Esophagus muscularis mucosa (tissue), 4 donors: ENCODE measurements at regions of chr3 and their contacts with region 1.

Region 1: DNA sequence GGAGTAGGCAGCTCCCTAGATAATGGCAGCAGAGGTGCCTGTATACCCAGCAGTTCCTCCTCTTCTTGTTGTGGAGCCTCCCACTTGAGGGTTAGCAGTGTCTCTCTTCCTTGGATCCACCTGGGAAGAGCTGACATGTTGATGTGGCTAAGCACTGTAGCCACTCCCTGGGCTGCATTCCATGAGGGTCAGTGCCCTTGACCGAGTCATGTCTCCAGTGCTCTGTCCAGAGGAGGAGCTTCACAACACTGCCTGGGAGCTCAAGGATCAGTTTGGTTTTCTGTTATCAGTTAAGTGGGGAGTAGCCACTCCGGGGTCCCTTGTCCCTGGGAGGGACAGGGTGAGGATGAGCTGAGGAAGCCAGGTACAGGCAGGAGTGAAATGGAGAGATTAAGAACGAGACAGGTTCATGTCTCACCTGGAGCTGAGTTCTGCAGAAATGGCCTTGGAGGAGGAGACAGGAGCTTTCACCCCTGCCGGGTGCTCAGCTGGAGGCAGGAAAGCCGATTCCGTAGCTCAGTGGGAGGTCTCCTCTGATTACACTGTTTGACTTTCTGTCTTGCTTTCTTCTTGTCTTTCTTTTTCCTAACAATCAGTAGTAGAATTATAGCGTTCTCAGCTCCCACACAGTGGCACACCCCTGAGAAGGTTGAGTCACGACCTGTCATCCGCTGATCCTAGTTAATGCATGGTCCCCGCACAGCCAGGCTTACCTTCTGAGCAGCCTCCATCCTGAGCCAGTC is 57.9 kb upstream of the SEC22A start:
- DNase-seq: no peak
- H3K4me3 ChIP-seq: no peak overlapping the region
- H3K27ac ChIP-seq: no peak overlapping the region
- H3K4me1 ChIP-seq: no peaks in the 10 kb centered on the region
- H3K27me3 ChIP-seq: no peaks in the 10 kb centered on the region
- CTCF ChIP-seq: no peak
- EP300 ChIP-seq: no peak
- POLR2A ChIP-seq: no peak

Region 2: DNA sequence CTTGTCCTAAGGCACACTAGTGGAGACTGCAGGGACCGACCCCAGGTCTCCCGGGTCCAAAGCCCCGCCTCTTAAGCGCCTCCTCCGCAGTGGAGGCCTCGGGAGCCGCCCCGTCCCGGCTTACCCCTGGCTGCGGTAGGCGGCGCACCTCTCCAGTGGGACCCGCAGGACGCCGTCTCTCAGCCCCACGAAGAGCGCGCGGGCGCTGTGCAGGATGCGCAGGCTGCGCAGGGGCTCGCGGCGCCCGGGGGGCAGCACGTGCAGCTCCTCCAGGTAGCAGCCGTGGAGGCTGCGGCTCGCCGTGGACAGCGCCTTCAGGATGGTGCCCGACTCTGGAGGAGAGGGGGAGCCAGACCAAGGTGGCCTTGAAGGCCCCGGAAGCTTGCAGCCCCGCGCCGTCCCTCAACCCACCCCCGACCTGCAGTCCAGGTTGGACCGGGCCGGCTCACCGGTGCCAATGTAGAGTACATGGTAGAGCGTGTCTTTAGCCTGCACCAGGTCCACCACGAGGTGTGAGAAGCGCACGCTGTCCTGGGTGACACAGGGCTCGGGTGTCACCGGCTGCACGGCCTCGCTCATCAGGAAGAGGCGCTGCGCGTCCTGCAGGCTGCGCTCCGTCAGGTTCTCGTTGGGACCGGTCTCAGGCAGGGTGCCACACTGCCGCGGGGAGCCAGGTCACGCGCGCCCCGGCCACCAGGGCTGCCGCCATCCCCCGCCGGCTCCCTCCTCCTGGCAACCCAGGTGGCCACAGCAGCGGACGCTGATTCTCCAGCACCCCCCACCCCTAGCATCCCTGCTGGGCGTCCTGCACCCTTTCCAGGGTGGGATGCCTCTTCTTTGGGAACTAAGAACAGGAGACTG is 221.8 kb before region 1 on chr3:
- intact Hi-C with region 1: loop called (anchors 10 kb)
- DNase-seq: no peak
- H3K4me3 ChIP-seq: peak overlapping the region; percentile 5 to 25 (median 24)
- H3K27ac ChIP-seq: no peak overlapping the region
- H3K4me1 ChIP-seq: peaks cover 0 to 11% (median 10%) of the 10 kb centered on the region in 4 donors
- H3K27me3 ChIP-seq: peaks cover 0 to 37% (median 13%) of the 10 kb centered on the region in 4 donors
- CTCF ChIP-seq: no peak
- EP300 ChIP-seq: no peak
- POLR2A ChIP-seq: no peak

Region 3: GRCh38 chr3:123431658-123432324 is 288.0 kb after region 1 on chr3:
- intact Hi-C with region 1: no loop called
- DNase-seq: no peak
- H3K4me3 ChIP-seq: no peak overlapping the region
- H3K27ac ChIP-seq: peak overlapping the region; percentile 91 to 97 (median 94)
- H3K4me1 ChIP-seq: peaks cover 71 to 99% (median 93%) of the 10 kb centered on the region in 4 donors
- H3K27me3 ChIP-seq: no peaks in the 10 kb centered on the region
- CTCF ChIP-seq: no peak
- EP300 ChIP-seq: no peak
- POLR2A ChIP-seq: no peak

Region 4: DNA sequence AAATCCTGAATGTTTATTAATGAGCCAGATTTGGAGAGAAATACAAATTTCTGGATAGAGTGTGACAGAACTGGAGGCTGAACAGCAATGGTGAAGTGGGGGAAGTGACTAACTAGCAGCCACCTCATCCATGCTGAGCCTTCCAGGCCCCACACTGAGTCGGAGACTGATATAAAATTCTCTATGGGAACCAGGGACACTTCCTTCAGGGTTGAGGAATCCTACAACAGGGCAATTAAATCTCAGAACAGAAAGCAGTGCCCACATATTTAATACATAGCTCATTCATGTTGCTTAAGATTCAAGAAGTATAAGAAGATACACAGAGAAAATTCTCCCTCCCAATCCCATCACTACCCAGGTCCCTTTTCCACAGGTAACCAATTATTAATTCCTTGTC is 391.7 kb after region 1 on chr3:
- intact Hi-C with region 1: no loop called
- DNase-seq: no peak
- H3K4me3 ChIP-seq: no peak overlapping the region
- H3K27ac ChIP-seq: no peak overlapping the region
- H3K4me1 ChIP-seq: peaks cover 0 to 18% (median 9%) of the 10 kb centered on the region in 4 donors
- H3K27me3 ChIP-seq: no peaks in the 10 kb centered on the region
- CTCF ChIP-seq: no peak
- EP300 ChIP-seq: no peak
- POLR2A ChIP-seq: no peak